ENCODE measurements at regions of chr16 and their contacts with region 1.

Region 1: GRCh38 chr16:64272028-64272427 is 849.8 kb downstream of the CDH11 start:
- DNase-seq: no peak
- H3K4me3 ChIP-seq: no peak overlapping the region
- H3K27ac ChIP-seq: no peak overlapping the region
- H3K4me1 ChIP-seq: no peaks in the 10 kb centered on the region
- H3K27me3 ChIP-seq: no peaks in the 10 kb centered on the region
- CTCF ChIP-seq: no peak
- POLR2A ChIP-seq: no peak

Region 2: DNA sequence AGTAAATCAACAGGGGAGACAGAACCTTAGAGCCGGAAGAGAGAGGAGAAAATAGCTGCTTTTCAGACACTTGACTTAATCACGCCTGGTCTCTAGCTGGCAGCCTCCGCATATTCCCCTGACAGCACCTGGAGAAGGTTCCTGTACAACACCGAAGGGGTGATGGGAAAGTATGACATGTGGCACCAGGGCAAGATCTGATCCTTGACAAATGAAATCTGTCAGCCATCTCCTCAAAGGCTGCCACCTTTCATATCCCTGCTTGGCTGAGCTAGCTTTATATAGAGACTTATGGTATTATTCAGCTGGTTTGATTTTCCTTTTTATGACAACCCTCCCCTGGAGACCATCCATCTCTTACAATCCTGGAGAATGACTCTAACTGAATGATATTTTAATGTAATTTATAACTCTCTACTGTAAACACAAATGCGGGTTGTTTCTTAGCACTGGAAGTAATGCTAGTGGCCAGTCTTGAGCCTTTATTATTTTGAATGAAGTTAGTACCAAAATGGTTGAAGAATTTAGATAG is 1030.5 kb before region 1 on chr16:
- intact Hi-C with region 1: no loop called
- DNase-seq: no peak
- H3K4me3 ChIP-seq: no peak overlapping the region
- H3K27ac ChIP-seq: no peak overlapping the region
- H3K4me1 ChIP-seq: no peaks in the 10 kb centered on the region
- H3K27me3 ChIP-seq: no peaks in the 10 kb centered on the region
- CTCF ChIP-seq: no peak
- POLR2A ChIP-seq: no peak

Region 3: GRCh38 chr16:63361032-63361624 is 910.9 kb before region 1 on chr16:
- intact Hi-C with region 1: no loop called
- DNase-seq: no peak
- H3K4me3 ChIP-seq: no peak overlapping the region
- H3K27ac ChIP-seq: no peak overlapping the region
- H3K4me1 ChIP-seq: no peaks in the 10 kb centered on the region
- H3K27me3 ChIP-seq: no peaks in the 10 kb centered on the region
- CTCF ChIP-seq: peak; percentile 10 to 58 (median 53)
- POLR2A ChIP-seq: no peak

Region 4: DNA sequence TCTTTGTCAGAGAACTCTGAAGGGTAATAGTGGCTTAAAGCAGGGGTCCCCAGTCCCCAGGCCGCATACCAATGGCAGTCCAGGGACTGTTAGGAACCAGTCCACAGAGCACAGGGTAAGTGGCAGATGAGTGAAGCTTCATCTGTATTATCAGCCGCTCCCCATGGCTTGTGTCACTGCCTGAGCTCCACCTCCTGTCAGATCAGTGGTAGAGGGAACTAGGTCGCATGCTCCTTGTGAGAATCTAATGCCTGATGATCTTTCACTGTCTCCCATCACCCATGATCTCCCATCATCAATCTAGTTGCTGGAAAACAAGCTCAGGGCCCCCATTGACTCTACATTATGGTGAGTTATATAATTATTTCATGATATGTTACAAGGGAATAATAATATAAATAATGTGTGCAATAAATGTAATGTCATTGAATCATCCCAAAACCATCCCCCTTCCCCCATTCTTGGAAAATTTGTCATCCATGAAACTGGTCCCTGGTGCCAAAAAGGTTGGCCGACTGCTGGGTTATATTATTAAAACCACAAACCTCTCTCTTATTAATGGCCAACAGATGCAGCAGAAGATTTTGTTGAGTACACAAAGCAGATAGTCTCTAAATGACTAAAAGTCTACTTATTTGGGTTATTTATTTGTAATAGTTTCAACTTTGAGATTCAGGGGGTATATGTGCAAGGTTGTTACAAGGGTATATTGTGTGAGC is 67.2 kb after region 1 on chr16:
- intact Hi-C with region 1: loop called (anchors 2 kb)
- DNase-seq: no peak
- H3K4me3 ChIP-seq: no peak overlapping the region
- H3K27ac ChIP-seq: no peak overlapping the region
- H3K4me1 ChIP-seq: no peaks in the 10 kb centered on the region
- H3K27me3 ChIP-seq: no peaks in the 10 kb centered on the region
- CTCF ChIP-seq: no peak
- POLR2A ChIP-seq: no peak

Region 5: GRCh38 chr16:64397945-64398508 is 126.0 kb after region 1 on chr16:
- intact Hi-C with region 1: no loop called
- DNase-seq: no peak
- H3K4me3 ChIP-seq: no peak overlapping the region
- H3K27ac ChIP-seq: no peak overlapping the region
- H3K4me1 ChIP-seq: no peaks in the 10 kb centered on the region
- H3K27me3 ChIP-seq: no peaks in the 10 kb centered on the region
- CTCF ChIP-seq: no peak
- POLR2A ChIP-seq: no peak

Measured in breast epithelium (tissue), 4 donors.